ENCODE measurements at regions of chr17 and their contacts with region 1.

Region 1: DNA sequence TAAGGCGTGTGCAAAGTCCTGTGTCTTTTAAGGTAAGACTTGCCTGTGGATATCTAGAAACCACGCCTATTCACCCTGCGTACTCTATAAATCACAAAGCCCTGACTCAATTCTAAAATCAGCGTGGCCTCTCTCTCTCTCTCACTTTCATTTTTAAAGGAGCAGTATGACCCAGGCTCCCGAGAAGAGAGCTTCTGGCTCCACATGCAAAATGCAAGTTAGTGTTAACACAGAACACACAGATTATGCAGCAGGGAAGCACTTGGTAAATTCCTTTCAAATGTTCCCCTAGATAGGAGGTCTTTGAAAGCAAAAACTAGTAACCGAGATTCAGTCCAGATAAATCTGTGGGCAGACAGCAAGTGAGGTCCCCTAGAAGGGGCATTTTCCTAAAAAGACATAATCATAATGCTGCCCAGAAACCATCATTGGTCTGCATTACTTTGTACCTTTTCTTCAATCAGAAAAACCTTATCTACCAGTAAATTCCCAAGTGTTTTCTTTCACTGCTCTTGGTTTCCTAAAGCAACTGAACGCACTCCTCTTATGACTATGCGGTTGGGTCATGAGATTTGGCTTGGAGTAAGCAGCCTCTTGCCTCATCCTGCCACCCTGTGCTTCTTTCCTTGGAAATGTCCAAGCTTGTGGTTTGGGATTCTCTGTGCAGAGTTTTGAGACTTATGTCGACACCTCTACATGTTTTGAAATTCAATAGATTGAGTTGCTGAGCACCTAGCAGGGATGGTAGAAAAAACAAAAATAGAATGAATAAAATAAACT is 31.7 kb upstream of the KCNJ2 start:
- DNase-seq: peak; percentile 89 to 94
- ATAC-seq: peak; percentile 97
- H3K4me3 ChIP-seq: peak overlapping the region; percentile 51 to 59 (median 54)
- H3K27ac ChIP-seq: peak overlapping the region; percentile 91 to 98 (median 93)
- H3K4me1 ChIP-seq: peaks cover 19 to 23% of the 10 kb centered on the region in 2 donors
- H3K27me3 ChIP-seq: no peaks in the 10 kb centered on the region
- CTCF ChIP-seq: no peak
- POLR2A ChIP-seq: peak; percentile 63 to 88

Region 2: DNA sequence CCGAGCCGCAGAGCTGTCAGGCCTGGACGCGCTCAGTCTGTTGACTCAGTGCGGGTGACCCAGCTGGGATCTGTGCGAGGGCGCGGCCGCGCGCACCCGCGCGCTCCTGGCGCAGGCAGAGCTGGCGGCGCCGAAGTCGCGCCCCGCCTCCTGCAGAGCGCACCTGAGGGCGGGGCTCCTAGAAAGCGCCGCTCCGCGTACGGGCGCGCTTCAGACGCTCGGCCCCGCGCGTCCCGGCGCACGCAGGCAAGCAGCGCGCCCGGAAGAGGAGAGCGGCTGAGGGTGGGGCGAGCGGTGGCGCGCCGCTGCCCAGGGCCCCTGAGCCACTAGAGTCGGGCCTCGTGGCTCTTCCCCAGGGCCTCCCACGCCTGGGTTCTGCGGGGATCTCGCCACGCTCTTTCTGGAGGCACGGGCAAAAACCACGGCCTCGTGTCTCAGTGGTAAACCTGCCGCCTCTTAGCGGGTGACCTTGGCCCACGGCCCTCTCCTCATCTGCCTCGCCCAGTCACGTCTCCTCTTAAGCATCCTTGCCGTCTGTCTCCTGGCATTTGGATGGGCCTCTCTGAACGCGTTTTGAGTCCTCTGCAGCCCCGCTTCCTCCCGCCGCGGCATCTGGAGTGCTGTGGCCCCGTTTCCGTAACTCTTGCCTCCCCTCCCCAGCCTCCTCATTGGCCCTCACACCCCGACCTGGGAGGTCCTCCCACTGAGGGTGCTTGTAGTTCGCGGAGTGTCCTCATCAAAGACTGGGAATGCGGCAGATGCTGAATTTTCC is 810.4 kb before region 1 on chr17 and contains the start of gene ABCA5:
- in situ Hi-C with region 1: loop called in 1 of 4 experiments (anchors 25 kb)
- intact Hi-C with region 1: loop called (anchors 10 kb)
- DNase-seq: peak; percentile 74 to 91
- ATAC-seq: peak; percentile 86
- H3K4me3 ChIP-seq: peak within 1 kb of the TSS; percentile 79 to 94 (median 90)
- H3K27ac ChIP-seq: peak within 1 kb of the TSS; percentile 91 to 98 (median 97)
- H3K4me1 ChIP-seq: peaks cover 25 to 34% of the 10 kb centered on the region in 2 donors
- H3K27me3 ChIP-seq: no peaks in the 10 kb centered on the region
- CTCF ChIP-seq: peak in 2 of 5 experiments; percentile 3
- POLR2A ChIP-seq: peak; percentile 97 to 99
- total RNA-seq, gene ABCA5: 62.8 to 228 (median 123) TPM

Region 3: DNA sequence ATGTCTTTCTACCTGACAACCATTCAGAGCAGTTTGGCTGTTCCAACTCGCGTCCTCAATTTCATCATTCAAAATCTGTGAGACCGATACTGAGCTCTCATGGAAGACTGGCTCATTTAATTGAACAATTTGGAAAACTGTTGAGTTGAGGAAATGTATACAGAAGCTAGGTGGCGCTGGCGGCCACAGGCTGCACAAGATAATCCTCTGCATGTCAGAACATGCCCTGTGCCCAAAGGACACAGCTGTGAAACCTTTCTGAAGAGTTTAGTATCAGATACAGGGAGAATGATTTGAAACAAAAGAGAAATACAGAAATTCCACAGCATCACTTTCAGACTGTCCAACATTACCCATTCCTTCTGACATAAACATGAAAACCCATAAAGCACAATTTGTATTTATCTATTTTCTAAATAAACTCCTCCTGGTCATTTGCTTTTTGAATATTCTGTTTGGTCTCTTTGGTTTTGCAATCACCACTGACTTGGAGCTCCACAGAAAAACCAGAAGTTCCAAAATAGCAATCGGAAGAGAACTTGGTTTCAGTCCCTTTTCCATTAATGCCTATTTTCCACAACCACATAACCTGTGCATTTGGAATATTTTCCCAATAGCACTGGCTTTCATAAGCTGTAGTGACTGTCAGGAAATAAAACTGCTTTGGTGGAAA is 530.3 kb before region 1 on chr17:
- in situ Hi-C with region 1: loop called in 1 of 4 experiments (anchors 10 kb)
- intact Hi-C with region 1: loop called (anchors 2 kb)
- DNase-seq: peak; percentile 55 to 75
- ATAC-seq: peak; percentile 60 to 88
- H3K4me3 ChIP-seq: no peak overlapping the region
- H3K27ac ChIP-seq: peak overlapping the region; percentile 69 to 80 (median 72)
- H3K4me1 ChIP-seq: peaks cover 27 to 35% of the 10 kb centered on the region in 2 donors
- H3K27me3 ChIP-seq: no peaks in the 10 kb centered on the region
- CTCF ChIP-seq: peak; percentile 78 to 94 (median 86)
- POLR2A ChIP-seq: no peak

Region 4: DNA sequence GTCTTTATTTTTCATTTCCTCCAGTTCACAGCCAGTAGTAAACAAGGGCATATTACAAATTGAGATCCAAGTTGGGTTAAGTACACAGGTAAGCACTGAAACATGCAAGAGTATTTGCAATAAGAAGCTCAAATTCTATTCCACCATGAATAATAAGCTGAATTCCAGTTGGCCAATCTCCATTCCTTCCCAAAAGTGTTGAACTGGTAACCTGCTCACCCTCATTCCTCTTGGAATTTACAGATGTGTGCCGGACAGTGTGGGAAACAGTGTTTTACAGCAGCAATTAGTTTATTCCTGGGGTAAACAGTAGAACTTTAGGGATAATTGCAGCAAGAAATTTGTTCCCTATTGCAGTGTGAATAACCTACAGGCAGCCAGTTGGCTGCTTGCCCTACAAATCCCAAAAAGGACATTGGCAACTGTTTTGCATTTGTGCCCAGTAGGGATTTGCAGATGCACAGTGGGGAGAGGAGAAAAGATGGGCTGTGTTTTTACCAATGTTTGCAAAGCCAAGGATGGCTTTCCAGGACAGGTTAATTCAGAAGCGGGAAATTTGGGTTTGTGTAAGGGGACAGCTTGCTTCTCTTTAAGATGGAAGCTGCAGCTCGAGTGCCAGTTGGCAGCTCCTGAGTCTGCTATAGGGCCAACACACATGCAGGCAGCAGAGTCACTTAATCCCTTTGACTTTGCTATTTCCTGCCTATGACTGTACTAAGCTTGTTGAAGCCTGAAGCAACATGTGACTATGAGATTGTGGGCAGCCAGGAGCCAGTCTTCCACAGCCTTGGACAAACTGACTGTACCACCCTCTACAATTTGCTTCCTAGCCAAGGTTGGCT is 404.2 kb before region 1 on chr17:
- in situ Hi-C with region 1: loop called in 1 of 4 experiments (anchors 25 kb)
- intact Hi-C with region 1: loop called (anchors 10 kb)
- DNase-seq: peak; percentile 82 to 91
- ATAC-seq: peak; percentile 100
- H3K4me3 ChIP-seq: no peak overlapping the region
- H3K27ac ChIP-seq: peak overlapping the region; percentile 74 to 83 (median 78)
- H3K4me1 ChIP-seq: peaks cover 32 to 40% of the 10 kb centered on the region in 2 donors
- H3K27me3 ChIP-seq: no peaks in the 10 kb centered on the region
- CTCF ChIP-seq: no peak
- POLR2A ChIP-seq: no peak

Region 5: GRCh38 chr17:70037498-70037897 is 100.1 kb before region 1 on chr17:
- in situ Hi-C with region 1: no loop called
- intact Hi-C with region 1: loop called (anchors 5 kb)
- DNase-seq: no peak
- ATAC-seq: peak; percentile 89
- H3K4me3 ChIP-seq: no peak overlapping the region
- H3K27ac ChIP-seq: peak overlapping the region in 1 of 4 donors; percentile 21
- H3K4me1 ChIP-seq: peaks cover 5 to 17% of the 10 kb centered on the region in 2 donors
- H3K27me3 ChIP-seq: no peaks in the 10 kb centered on the region
- CTCF ChIP-seq: no peak
- POLR2A ChIP-seq: no peak

Region 6: DNA sequence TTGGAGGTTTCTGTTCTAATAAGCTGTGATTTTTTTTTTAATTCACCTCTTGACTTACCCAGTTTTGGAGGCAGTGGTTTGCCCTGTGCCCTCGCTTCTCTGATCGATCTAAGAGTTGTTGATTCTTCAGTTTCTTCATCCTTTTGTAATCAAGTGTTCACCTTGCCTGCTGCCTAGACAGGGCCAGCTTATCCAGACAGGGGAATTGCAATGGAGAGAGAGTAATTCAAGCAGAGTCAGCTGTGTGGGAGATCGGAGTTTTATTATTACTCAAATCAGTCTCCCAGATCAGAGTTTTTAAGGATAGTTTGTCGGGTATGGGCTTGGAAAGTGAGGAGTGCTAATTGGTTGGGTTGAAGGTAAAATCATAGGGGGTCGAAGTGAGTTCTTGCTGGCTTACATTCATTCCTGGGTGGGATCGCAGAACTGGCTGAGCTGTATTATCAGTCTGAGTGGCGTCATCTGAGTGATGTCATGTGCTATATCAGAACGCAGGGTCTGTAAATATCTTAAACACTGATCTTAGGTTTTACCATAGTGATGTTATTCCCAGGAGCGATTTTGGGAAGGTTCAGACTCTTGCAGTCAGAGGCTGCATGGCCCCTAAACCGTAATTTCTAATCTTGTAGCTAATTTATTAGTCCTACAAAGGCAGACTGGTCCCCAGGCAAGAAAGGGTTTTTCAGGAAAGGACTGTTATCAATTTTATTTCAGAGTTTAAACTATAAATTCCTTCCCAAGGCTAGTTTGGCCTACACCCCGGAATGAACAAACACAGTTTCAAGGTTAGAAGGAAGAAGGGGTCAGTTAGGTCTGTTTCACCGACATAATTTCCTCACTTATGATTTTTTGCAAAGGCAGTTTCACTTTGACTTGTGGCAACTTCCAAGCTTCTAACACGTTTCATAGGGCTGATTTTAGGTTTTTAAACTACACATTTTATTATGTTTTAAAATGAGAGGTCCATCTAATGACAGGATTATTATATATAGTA is 84.1 kb before region 1 on chr17:
- in situ Hi-C with region 1: no loop called
- intact Hi-C with region 1: loop called (anchors 5 kb)
- DNase-seq: no peak
- ATAC-seq: peak in 1 of 2 donors; percentile 70
- H3K4me3 ChIP-seq: peak overlapping the region; percentile 5 to 42 (median 39)
- H3K27ac ChIP-seq: peak overlapping the region in 3 of 4 donors; percentile 28 to 47 (median 36)
- H3K4me1 ChIP-seq: peaks cover 18 to 22% of the 10 kb centered on the region in 2 donors
- H3K27me3 ChIP-seq: no peaks in the 10 kb centered on the region
- CTCF ChIP-seq: no peak
- POLR2A ChIP-seq: no peak

Region 7: GRCh38 chr17:70202840-70203239 is 65.2 kb after region 1 on chr17:
- in situ Hi-C with region 1: no loop called
- intact Hi-C with region 1: no loop called
- DNase-seq: no peak
- ATAC-seq: no peak
- H3K4me3 ChIP-seq: no peak overlapping the region
- H3K27ac ChIP-seq: peak overlapping the region in 1 of 4 donors; percentile 59
- H3K4me1 ChIP-seq: peaks cover 18 to 27% of the 10 kb centered on the region in 2 donors
- H3K27me3 ChIP-seq: no peaks in the 10 kb centered on the region
- CTCF ChIP-seq: no peak
- POLR2A ChIP-seq: no peak